Right ventricle myocardium inferior (tissue), 1 donor: ENCODE measurements at regions of chr6 and their contacts with region 1.

Region 1: GRCh38 chr6:110528101-110528929 is 51.9 kb upstream of the SLC22A16 start:
- DNase-seq: no peak
- ATAC-seq: peak; percentile 72

Region 2: DNA sequence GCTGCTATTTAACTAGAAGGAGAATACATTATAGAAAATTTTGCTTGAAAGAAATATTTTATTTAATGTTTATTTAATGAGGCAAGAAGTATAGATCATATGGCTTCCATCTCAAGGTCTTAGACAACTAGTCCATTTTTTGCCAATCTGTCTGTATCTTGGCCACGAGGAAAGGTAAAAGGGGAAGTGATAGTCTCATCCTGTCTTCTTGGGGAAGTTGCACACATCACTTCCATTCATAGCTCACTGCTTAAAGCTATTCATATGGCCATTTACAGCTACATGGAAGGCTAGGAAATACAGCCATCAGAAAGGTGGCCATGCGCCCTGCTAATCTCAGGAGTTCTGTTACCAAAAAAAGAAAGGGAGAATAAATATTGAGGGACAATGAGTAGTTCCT is 220.9 kb before region 1 on chr6:
- intact Hi-C with region 1: no loop called
- DNase-seq: no peak
- ATAC-seq: no peak

Region 3: GRCh38 chr6:110322874-110323242 is 205.5 kb before region 1 on chr6:
- intact Hi-C with region 1: no loop called
- DNase-seq: no peak
- ATAC-seq: no peak

Region 4: GRCh38 chr6:110682460-110682853 is 154.1 kb after region 1 on chr6:
- intact Hi-C with region 1: loop called (anchors 2 kb)
- DNase-seq: no peak
- ATAC-seq: peak; percentile 98

Region 5: DNA sequence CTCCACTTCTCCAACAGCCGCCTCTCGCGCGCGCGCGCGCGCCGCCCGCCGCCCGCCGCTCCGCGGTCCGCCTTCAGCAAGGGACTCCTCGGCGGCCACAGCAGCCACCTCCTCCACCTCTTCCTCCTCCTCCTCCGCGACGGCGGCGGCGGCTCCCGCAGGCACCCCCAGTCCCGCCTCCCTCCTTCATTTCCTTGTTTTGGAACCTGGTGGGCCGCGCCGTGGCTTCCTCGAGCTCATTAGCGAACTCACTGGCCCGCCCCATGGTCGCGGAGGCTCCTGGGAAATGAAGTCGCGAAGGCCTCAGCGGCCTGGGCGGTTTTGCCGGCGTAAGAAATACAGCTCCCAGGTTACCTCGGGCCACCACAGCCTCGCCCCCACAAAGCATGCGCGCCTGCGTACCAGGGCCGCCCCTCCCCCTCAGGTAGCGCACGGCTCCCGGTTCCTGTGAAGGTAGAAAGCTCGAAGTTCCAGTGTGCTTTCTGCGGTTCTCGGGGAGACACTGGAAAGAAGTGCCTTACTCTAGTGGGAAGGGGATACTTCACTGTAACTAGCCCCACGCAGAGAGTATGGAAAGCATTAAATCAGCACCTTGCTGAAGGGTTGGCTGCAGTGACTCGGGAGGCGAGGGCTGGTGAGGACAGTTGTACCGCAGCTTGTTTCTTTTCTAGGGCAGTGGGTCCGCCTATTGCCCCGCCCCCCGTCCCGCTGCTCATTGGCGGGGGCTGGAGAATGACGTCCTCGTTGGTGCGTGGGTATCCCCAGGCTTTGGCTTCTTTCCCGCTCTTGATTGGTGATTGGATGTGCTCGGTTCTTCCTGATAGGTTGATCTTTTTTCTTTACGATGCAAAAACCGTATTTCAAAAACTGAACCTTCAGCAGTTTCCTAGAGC is 287.1 kb after region 1 on chr6 and contains the start of gene CDK19:
- intact Hi-C with region 1: loop called (anchors 10 kb)
- DNase-seq: peak; percentile 100
- ATAC-seq: peak; percentile 98
- total RNA-seq, gene CDK19: 11.5 TPM

Region 6: GRCh38 chr6:110873981-110874879 is 345.9 kb after region 1 on chr6 and contains the start of gene AMD1:
- intact Hi-C with region 1: loop called (anchors 2 kb)
- DNase-seq: peak; percentile 99
- ATAC-seq: peak; percentile 91
- total RNA-seq, gene AMD1: 84.9 TPM

Region 7: DNA sequence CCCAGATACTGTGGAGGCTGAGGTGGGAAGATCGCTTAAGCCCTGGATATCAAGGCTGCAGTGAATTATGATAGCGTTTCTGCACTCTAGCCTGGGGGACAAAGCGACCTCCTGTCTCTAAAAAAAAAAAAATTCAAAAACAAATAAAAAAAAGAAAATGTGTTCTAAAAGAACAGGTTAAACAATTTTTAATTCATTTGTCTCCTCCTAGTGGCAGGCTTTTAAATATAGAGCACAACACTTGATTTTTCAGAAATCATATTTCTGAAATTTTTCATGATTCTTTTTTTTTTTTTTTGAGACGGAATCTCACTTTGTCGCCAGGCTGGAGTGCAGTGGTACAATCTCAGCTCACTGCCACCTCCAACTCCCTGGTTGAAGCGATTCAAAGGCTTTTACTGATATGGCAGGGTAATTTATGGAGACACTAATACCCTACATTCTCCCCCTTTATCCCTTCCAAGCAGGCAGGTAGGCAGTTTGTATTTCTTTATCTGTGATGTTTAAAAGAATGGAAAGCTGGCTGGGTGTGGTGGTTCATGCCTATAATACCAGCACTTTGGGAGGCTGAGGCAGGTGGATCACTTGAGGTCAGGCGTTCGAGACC is 421.5 kb after region 1 on chr6:
- intact Hi-C with region 1: loop called (anchors 1 kb)
- DNase-seq: no peak
- ATAC-seq: no peak

Region 8: DNA sequence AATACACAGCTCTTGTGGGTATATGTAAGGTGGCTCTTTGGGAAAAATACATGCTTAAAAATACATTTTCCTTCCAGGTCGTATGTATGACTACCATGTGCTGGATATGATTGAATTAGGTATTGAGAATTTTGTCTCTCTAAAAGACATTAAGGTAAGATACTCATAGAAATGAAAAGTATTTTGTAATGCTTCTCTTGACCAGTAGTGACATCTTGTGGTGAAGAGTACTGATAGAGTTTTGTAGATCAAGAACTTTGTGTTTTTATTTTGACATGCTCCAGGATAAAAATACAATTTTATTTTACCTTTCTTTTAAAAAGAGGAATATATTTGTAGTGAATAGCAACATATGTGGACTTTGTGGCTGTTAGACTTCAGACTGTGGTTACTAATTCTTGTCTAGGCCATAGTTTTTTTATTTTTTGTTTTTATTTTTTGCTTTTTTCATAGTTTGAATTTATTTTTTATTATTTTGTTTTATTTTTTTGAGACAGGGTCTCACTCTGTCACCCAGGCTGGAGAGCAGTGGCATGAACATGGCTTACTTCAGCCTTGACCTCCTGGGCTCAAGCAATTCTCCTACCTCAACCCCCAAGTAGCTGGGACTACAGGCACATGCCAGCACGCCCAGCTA is 471.4 kb after region 1 on chr6:
- intact Hi-C with region 1: loop called (anchors 5 kb)
- DNase-seq: no peak
- ATAC-seq: no peak

Region 9: GRCh38 chr6:111210194-111210728 is 681.9 kb after region 1 on chr6:
- intact Hi-C with region 1: loop called (anchors 10 kb)
- DNase-seq: no peak
- ATAC-seq: no peak